Activated B cell treated with CpG ODN at 0.5 μM for 24 hours (primary cell): ENCODE measurements at regions of chr15 and their contacts with region 1.

Region 1: GRCh38 chr15:59349680-59350420 is 22.8 kb downstream of the MYO1E start:
- DNase-seq: no peak
- ATAC-seq: peak; percentile 62
- H3K4me3 Mint-ChIP-seq: no peak overlapping the region
- H3K27ac Mint-ChIP-seq: peak overlapping the region; percentile 66
- H3K4me1 Mint-ChIP-seq: peaks cover 92% of the 10 kb centered on the region
- H3K27me3 Mint-ChIP-seq: no peaks in the 10 kb centered on the region
- CTCF ChIP-seq: no peak

Region 2: GRCh38 chr15:59148153-59148833 is 201.6 kb before region 1 on chr15:
- CTCF ChIA-PET with region 1: no interaction called
- POLR2A ChIA-PET with region 1: no interaction called
- intact Hi-C with region 1: no loop called
- DNase-seq: no peak
- ATAC-seq: no peak
- H3K4me3 Mint-ChIP-seq: no peak overlapping the region
- H3K27ac Mint-ChIP-seq: no peak overlapping the region
- H3K4me1 Mint-ChIP-seq: no peaks in the 10 kb centered on the region
- H3K27me3 Mint-ChIP-seq: no peaks in the 10 kb centered on the region
- CTCF ChIP-seq: no peak

Region 3: DNA sequence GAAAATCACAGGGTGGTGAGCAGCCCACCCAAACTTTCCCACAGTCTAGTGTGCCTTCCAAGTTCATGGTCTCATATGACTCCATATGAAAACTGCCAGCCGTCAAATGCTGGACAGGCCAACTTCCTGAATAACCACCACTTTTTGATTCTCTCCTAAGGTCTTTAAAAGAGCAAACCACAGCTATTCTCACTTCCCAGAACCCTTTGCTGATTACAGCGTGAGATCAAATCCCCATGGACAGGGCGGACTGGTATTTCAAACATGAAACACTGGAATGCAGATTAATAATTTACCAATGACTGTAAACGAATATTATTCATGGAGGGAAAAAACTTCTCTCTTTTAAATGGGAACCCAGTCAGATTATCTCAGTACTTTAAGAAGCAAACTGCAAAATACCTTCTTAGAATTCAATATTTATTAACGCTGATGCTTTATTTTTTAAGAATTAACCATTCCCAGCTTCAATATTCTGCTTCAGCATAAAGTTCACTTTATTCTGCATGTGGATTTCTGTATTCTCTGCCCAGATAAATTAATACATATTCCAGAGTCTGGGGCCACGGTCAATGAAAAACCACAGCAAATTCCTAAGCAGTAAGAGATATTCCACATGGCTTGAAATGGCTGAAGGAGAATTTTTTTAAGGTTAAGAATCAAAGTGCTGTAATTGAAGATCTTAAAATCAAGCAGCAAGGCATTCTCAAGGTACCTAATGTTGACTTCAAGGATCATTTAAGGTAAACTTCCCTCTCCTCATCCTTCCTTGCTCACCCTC is 20.1 kb before region 1 on chr15:
- CTCF ChIA-PET with region 1: no interaction called
- POLR2A ChIA-PET with region 1: interaction called, 3 read pairs
- intact Hi-C with region 1: loop called (anchors 2 kb)
- DNase-seq: no peak
- ATAC-seq: no peak
- H3K4me3 Mint-ChIP-seq: no peak overlapping the region
- H3K27ac Mint-ChIP-seq: no peak overlapping the region
- H3K4me1 Mint-ChIP-seq: peaks cover 84% of the 10 kb centered on the region
- H3K27me3 Mint-ChIP-seq: no peaks in the 10 kb centered on the region
- CTCF ChIP-seq: no peak